IMR-90 (cell line): ENCODE measurements at regions of chr3 and their contacts with region 1.

Region 1: DNA sequence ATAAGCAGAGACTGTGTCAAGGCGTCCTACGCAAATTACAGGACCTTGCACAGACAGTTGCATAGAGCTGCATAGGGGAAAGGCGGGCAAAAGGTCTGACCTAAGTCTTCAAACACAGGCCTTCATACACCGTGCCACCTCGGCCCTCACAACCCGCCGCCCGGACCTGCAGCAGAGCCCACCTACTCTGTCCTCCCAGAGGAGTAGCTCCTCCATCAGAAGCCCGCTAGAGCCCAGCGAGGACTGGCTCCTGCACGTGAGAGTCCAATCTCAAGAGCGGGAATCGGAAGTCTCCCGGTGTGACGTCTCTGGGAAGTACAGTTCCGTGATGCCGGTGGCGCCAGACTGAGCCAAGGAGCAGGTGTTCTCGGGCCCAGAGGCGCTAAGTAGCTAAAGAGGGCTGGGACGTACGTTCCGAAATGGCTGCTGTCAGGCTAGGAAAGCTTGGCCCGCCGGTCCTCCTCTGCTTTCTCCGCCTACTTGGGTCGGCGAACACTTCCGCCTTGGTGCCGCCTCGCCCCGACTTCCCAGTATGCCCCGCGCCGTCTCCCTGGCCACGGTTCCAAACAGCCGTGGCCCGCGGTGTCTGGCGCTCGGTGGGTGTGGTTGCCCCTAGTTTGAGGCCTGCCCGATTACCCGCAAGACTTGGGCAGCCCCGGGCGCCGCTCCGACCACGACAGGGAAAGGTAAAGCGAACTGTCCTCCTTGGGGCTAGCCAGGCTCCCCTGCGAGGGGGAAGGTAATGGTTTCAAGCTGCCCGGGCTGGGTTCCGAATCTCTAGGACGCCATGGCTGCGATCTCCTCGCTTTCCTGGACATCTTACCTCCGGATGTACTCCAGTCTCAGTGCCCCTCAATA is at the starts of genes ASTE1 and NEK11:
- DNase-seq: peak; percentile 73
- ATAC-seq: peak; percentile 99
- H3K4me3 ChIP-seq: peak within 1 kb of the TSS; percentile 96
- H3K27ac ChIP-seq: peak within 1 kb of the TSS; percentile 96
- H3K4me1 ChIP-seq: peaks cover 2% of the 10 kb centered on the region; the same call in 1 of the 2 replicates
- H3K27me3 ChIP-seq: no peaks in the 10 kb centered on the region
- CTCF ChIP-seq: no peak
- POLR2A ChIP-seq: peak; percentile 70
- RAD21 ChIP-seq: no peak
- total RNA-seq, gene ASTE1: 7.5 and 8.1 TPM in 2 replicates
- total RNA-seq, gene NEK11: 1.6 and 1.9 TPM in 2 replicates

Region 2: DNA sequence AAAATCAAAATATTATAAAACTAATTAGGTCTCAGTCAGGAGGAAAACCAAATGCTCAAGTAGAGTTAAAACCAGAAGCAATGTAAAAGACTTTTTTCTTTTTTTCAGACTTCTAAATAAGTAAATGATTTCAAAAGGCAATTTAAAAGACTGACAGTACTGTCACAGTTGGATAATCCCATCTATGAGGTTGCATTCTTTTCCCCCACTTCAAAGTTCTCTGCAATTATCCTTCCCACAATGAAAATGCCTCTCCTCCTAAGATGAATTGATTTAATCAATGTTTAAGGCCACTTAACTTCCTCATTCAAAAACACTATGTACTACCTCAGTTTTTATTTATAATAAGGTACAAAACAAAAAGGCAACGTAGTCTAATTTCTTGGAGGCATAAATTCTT is 468.2 kb after region 1 on chr3:
- CTCF ChIA-PET with region 1: no interaction called
- POLR2A ChIA-PET with region 1: no interaction called
- dilution Hi-C with region 1: no loop called
- in situ Hi-C with region 1: loop called (anchors 25 kb)
- intact Hi-C with region 1: no loop called
- DNase-seq: no peak
- ATAC-seq: no peak
- H3K4me3 ChIP-seq: no peak overlapping the region
- H3K27ac ChIP-seq: no peak overlapping the region
- H3K4me1 ChIP-seq: no peaks in the 10 kb centered on the region
- H3K27me3 ChIP-seq: no peaks in the 10 kb centered on the region
- CTCF ChIP-seq: no peak
- POLR2A ChIP-seq: no peak
- RAD21 ChIP-seq: no peak